Calu3 (cell line): ENCODE measurements at regions of chr6 and their contacts with region 1.

Region 1: GRCh38 chr6:89371849-89372505 is 19.5 kb upstream of the UBE2J1 start:
- DNase-seq: peak; percentile 83
- H3K4me3 Mint-ChIP-seq: no peak overlapping the region
- H3K27ac Mint-ChIP-seq: no peak overlapping the region
- H3K4me1 Mint-ChIP-seq: no peaks in the 10 kb centered on the region
- H3K27me3 Mint-ChIP-seq: no peaks in the 10 kb centered on the region
- CTCF ChIP-seq: peak; percentile 92

Region 2: DNA sequence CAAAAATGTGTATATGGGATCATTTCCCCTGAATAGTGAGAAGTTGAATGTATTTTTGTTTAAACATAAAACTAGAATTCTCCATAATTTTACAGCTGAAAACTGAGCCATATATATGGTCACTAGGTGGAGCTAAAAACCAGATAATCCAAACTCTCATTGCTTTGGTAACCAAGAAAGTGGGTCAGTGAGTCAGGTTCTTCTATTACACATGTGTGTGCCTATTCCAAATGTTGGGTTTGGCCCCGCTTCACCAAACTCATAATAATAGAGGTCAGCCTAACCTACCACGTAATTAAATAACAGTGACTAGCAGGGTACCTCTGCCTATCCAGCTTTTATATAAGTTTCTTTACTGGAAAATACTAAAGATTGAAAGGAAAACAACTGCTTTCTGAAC is 389.3 kb before region 1 on chr6:
- CTCF ChIA-PET with region 1: interaction called, 3 read pairs
- intact Hi-C with region 1: loop called (anchors 2 kb)
- DNase-seq: no peak
- H3K4me3 Mint-ChIP-seq: no peak overlapping the region
- H3K27ac Mint-ChIP-seq: no peak overlapping the region
- H3K4me1 Mint-ChIP-seq: peaks cover 14% of the 10 kb centered on the region
- H3K27me3 Mint-ChIP-seq: no peaks in the 10 kb centered on the region
- CTCF ChIP-seq: no peak

Region 3: GRCh38 chr6:89260832-89261231 is 111.1 kb before region 1 on chr6:
- CTCF ChIA-PET with region 1: no interaction called
- intact Hi-C with region 1: loop called (anchors 5 kb)
- DNase-seq: no peak
- H3K4me3 Mint-ChIP-seq: no peak overlapping the region
- H3K27ac Mint-ChIP-seq: no peak overlapping the region
- H3K4me1 Mint-ChIP-seq: no peaks in the 10 kb centered on the region
- H3K27me3 Mint-ChIP-seq: no peaks in the 10 kb centered on the region
- CTCF ChIP-seq: no peak

Region 4: DNA sequence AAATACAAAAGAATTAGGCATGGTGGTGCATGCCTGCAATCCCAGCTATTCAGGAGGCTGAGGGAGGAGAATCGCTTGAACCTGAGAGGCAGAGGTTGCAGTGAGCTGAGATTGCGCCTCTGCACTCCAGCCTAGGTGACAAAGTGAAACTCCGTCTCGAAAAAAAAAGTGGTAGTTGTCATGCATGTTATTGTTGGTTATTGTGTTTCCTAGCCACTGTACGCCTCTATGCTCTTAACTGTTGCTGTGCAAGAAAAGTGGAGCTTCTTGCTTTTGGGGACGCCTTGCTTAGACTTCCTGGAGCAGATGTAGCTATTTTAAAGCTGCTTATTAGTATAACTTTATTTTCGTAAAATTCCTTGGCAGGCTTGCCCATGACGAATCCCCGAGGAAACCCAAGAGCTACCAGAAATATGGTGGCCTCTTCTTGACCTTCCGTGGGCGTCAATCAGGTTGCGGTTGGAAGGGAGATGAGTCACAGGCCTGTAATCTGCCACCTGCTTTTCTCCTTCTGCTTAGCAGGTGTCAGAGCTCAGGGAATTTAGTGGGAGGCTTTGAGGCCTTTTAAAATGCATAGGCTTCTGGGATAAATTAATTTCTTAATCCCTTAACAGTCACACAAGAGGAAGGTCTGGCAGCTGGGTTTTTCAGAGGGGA is 74.2 kb before region 1 on chr6:
- CTCF ChIA-PET with region 1: interaction called, 5 read pairs
- intact Hi-C with region 1: loop called (anchors 5 kb)
- DNase-seq: peak; percentile 90
- H3K4me3 Mint-ChIP-seq: peak overlapping the region; percentile 47
- H3K27ac Mint-ChIP-seq: peak overlapping the region; percentile 98
- H3K4me1 Mint-ChIP-seq: peaks cover 44% of the 10 kb centered on the region
- H3K27me3 Mint-ChIP-seq: no peaks in the 10 kb centered on the region
- CTCF ChIP-seq: no peak

Region 5: DNA sequence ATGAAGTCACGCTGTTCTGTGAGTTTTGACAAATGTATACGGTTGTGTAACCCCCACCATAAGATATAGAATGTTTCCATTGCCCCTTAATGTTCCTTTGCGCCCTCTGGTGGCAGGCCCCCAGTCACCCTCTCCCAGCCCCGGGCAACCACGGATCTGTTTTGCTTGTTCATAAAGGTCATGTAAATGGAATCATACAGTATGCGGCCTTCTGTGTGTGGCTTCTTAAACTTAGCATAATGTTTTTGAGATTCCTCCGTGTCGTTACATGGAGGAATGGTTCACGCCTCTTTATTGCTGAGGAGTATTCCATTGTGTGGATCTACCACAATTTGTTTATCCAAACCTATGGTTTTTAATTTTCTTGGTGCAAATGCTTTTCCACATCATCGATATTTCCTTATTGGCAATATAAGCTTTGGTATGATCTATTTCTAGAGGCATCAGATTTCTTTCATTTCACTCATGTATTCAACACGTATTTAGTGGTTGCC is 238.2 kb after region 1 on chr6:
- CTCF ChIA-PET with region 1: interaction called, 5 read pairs
- intact Hi-C with region 1: loop called (anchors 1 kb)
- DNase-seq: peak; percentile 85
- H3K4me3 Mint-ChIP-seq: no peak overlapping the region
- H3K27ac Mint-ChIP-seq: no peak overlapping the region
- H3K4me1 Mint-ChIP-seq: no peaks in the 10 kb centered on the region
- H3K27me3 Mint-ChIP-seq: no peaks in the 10 kb centered on the region
- CTCF ChIP-seq: peak; percentile 73